CD4-positive, alpha-beta T cell (primary cell): ENCODE measurements at regions of chr15 and their contacts with region 1.

Region 1: GRCh38 chr15:66417736-66418135 is 31.0 kb downstream of the MAP2K1 start:
- DNase-seq: no peak
- ATAC-seq: no peak
- H3K4me3 ChIP-seq: no peak overlapping the region
- H3K4me3 Mint-ChIP-seq: no peak overlapping the region
- H3K27ac ChIP-seq: no peak overlapping the region
- H3K27ac Mint-ChIP-seq: no peak overlapping the region
- H3K4me1 ChIP-seq: peaks cover 20% of the 10 kb centered on the region
- H3K4me1 Mint-ChIP-seq: peaks cover 66% of the 10 kb centered on the region
- H3K27me3 ChIP-seq: no peaks in the 10 kb centered on the region
- H3K27me3 Mint-ChIP-seq: no peaks in the 10 kb centered on the region
- CTCF ChIP-seq: no peak

Region 2: DNA sequence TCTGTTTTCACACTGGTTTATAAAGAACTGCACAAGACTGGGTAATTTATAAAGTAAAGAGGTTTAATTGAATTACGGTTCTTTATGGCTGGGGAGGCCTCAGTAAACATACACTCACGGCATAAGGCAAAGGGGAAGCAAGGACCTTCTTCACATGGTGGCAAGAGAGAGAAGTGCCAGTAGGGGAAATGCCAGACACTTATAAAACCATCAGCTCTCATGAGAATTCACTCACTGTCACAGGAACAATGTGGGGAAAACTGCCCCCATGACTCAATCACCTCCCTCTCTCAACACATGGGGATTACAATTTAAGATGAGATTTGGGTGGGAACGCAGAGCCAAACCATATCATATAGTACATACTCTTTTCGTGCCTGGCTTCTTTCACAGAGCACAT is 11.4 kb after region 1 on chr15:
- CTCF ChIA-PET with region 1: no interaction called
- POLR2A ChIA-PET with region 1: no interaction called
- intact Hi-C with region 1: no loop called
- DNase-seq: peak in 2 of 14 experiments; percentile 31 to 53
- ATAC-seq: no peak
- H3K4me3 ChIP-seq: no peak overlapping the region
- H3K4me3 Mint-ChIP-seq: no peak overlapping the region
- H3K27ac ChIP-seq: no peak overlapping the region
- H3K27ac Mint-ChIP-seq: no peak overlapping the region
- H3K4me1 ChIP-seq: peaks cover 27% of the 10 kb centered on the region
- H3K4me1 Mint-ChIP-seq: peaks cover 85% of the 10 kb centered on the region
- H3K27me3 ChIP-seq: no peaks in the 10 kb centered on the region
- H3K27me3 Mint-ChIP-seq: no peaks in the 10 kb centered on the region
- CTCF ChIP-seq: no peak

Region 3: DNA sequence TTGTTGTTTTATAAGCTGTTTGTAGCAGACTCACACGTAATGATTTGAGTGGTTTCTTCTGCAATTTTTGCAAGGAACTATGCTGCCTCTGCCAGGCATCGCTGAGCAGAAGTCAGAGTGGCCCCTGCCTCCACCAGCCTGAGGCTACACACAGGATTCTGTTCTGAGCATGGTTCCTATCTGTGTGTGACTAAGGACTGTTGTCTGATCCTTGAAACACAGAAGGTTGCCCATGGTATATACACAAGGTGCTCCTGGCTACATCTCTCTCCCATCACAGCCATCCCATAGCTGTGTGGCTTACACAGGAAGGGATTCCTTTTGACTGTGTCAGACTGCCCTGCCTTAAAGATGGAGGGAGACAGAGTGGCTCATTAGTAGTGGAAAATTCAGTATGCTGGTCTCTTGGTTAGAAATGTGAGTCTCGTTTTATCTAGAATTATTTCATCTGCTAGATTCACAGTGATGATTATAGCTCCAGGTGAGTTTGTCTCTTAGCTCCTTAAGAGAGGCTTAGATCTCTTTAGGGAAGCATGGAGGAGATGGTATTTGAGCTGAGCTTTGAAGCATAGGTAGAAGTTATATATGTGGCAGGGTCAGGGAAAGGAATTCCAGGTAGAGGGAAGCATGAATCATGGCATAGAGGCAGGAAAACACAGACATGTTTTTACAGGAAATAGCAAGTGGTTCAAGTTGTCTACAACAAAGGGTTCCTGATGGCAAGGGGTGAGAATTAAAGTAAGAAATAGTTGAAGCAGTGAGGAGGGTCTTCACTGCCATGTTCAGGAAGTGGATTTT is 42.3 kb after region 1 on chr15:
- CTCF ChIA-PET with region 1: no interaction called
- POLR2A ChIA-PET with region 1: no interaction called
- intact Hi-C with region 1: loop called in 1 of 2 experiments (anchors 5 kb)
- DNase-seq: no peak
- ATAC-seq: no peak
- H3K4me3 ChIP-seq: no peak overlapping the region
- H3K4me3 Mint-ChIP-seq: no peak overlapping the region
- H3K27ac ChIP-seq: no peak overlapping the region
- H3K27ac Mint-ChIP-seq: peak overlapping the region; percentile 45
- H3K4me1 ChIP-seq: no peaks in the 10 kb centered on the region
- H3K4me1 Mint-ChIP-seq: peaks cover 22% of the 10 kb centered on the region
- H3K27me3 ChIP-seq: no peaks in the 10 kb centered on the region
- H3K27me3 Mint-ChIP-seq: no peaks in the 10 kb centered on the region
- CTCF ChIP-seq: no peak

Region 4: GRCh38 chr15:68295014-68295805 is 1877.5 kb after region 1 on chr15:
- CTCF ChIA-PET with region 1: no interaction called
- POLR2A ChIA-PET with region 1: no interaction called
- intact Hi-C with region 1: no loop called
- DNase-seq: no peak
- ATAC-seq: no peak
- H3K4me3 ChIP-seq: no peak overlapping the region
- H3K4me3 Mint-ChIP-seq: no peak overlapping the region
- H3K27ac ChIP-seq: no peak overlapping the region
- H3K27ac Mint-ChIP-seq: peak overlapping the region; percentile 42
- H3K4me1 ChIP-seq: peaks cover 13% of the 10 kb centered on the region
- H3K4me1 Mint-ChIP-seq: peaks cover 64% of the 10 kb centered on the region
- H3K27me3 ChIP-seq: no peaks in the 10 kb centered on the region
- H3K27me3 Mint-ChIP-seq: no peaks in the 10 kb centered on the region
- CTCF ChIP-seq: no peak